ENCODE measurements at regions of chr19 and their contacts with region 1.

Region 1: GRCh38 chr19:12333162-12334159 is at the start of gene ZNF563:
- DNase-seq: peak; percentile 99
- ATAC-seq: peak; percentile 93
- H3K4me3 Mint-ChIP-seq: peak within 1 kb of the TSS; percentile 78
- H3K27ac Mint-ChIP-seq: peak within 1 kb of the TSS; percentile 98
- H3K4me1 Mint-ChIP-seq: peaks cover 32% of the 10 kb centered on the region
- H3K27me3 Mint-ChIP-seq: no peaks in the 10 kb centered on the region
- total RNA-seq, gene ZNF563: 6.6 to 6.7 TPM

Region 2: DNA sequence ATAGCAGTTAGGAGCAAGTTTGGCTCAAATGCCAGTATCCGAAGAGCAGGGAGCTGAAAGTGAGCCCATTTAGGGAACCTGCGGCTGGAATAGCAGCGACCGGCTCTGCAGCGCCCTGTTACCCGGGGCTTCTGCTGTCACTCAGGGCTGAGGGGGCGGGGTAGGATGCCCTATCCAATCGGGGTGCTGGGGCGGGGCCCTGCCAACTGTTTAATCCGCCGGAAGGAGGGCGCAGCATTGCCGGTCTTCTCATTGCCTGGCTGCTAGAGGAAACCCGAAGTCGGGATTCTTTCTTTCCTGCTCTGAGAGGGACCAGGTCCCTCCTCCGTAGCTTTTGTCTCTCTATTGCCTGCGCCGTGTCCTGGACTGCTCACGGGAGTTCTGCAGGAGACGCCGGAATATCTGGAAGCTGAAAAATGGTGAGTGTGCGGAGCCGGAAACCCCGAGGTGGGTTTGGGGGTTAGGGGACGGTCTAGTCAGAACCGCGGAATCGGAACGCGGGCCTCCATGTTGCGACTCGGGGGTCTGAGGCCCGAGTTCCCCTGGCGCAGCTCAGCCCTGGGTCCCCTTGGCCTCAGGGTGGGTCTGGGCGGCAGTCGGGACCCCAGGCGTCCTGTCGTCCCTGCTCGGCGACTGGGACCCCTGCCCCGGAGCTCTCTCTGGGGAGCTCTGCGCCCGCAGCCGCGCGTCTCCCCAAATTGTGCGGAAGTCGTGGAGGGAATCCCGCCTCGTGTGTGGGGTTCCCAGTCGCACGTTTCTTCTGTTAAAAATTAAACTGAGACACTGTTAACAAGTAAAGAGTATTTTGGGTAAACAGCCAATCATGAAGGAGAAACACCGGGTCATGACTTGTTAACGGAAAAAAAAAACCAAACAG is 345.8 kb before region 1 on chr19:
- CTCF ChIA-PET with region 1: no interaction called
- POLR2A ChIA-PET with region 1: no interaction called
- intact Hi-C with region 1: loop called in 1 of 2 experiments (anchors 1 kb)
- DNase-seq: peak; percentile 98
- ATAC-seq: peak; percentile 98
- H3K4me3 Mint-ChIP-seq: peak overlapping the region; percentile 86
- H3K27ac Mint-ChIP-seq: peak overlapping the region; percentile 92
- H3K4me1 Mint-ChIP-seq: peaks cover 18% of the 10 kb centered on the region
- H3K27me3 Mint-ChIP-seq: no peaks in the 10 kb centered on the region

Region 3: GRCh38 chr19:12194827-12195731 is 138.4 kb before region 1 on chr19:
- CTCF ChIA-PET with region 1: no interaction called
- POLR2A ChIA-PET with region 1: no interaction called
- intact Hi-C with region 1: loop called (anchors 5 kb)
- DNase-seq: peak; percentile 91
- ATAC-seq: peak; percentile 94
- H3K4me3 Mint-ChIP-seq: peak overlapping the region; percentile 78
- H3K27ac Mint-ChIP-seq: peak overlapping the region; percentile 86
- H3K4me1 Mint-ChIP-seq: peaks cover 33% of the 10 kb centered on the region
- H3K27me3 Mint-ChIP-seq: peaks cover 5% of the 10 kb centered on the region

Region 4: GRCh38 chr19:12365236-12366162 is 32.0 kb after region 1 on chr19 and contains the start of gene ZNF442:
- CTCF ChIA-PET with region 1: interaction called, 4 read pairs
- POLR2A ChIA-PET with region 1: interaction called, 5 read pairs
- intact Hi-C with region 1: loop called (anchors 1 to 5 kb)
- DNase-seq: peak; percentile 93
- ATAC-seq: peak; percentile 99
- H3K4me3 Mint-ChIP-seq: peak within 1 kb of the TSS; percentile 93
- H3K27ac Mint-ChIP-seq: peak within 1 kb of the TSS; percentile 79
- H3K4me1 Mint-ChIP-seq: peaks cover 18% of the 10 kb centered on the region
- H3K27me3 Mint-ChIP-seq: no peaks in the 10 kb centered on the region
- total RNA-seq, gene ZNF442: 1.1 to 1.7 TPM

Region 5: DNA sequence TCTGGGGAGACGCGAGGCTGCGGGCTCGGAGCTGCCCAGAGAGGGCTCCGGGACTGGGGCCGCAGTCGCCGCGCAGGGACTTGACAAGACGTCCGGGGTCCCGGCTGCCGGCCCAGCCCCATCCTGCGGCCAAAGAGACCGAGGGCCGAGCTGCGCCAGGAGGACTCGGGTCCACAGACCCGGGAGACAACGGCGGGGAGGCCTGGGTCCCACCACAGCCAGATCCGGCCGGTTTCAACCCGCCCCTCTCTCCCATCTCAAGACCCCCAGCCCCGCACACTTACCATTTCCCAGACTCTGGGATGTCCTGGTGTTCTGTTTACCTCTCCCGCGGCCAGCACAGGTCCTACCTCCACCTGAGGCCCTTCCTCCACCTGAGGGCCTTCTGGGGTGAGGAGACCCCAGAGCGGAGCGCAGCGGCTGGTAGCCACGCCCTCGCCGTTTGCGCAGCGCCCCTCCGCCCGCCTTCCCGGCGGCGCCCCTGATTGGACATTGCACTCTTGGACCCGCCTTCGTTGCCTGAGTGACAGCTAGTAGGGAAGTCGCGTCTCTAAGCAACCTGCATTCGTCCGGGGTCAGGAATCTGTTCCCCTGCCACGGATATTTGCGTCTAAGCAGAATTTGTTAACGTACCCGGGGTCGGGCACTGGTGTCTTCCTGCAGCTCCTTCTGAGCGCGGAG is 151.1 kb after region 1 on chr19 and contains the start of gene ZNF709:
- CTCF ChIA-PET with region 1: no interaction called
- POLR2A ChIA-PET with region 1: no interaction called
- intact Hi-C with region 1: loop called in 1 of 2 experiments (anchors 1 kb)
- DNase-seq: peak; percentile 92
- ATAC-seq: peak; percentile 98
- H3K4me3 Mint-ChIP-seq: peak within 1 kb of the TSS; percentile 87
- H3K27ac Mint-ChIP-seq: peak within 1 kb of the TSS; percentile 58
- H3K4me1 Mint-ChIP-seq: peaks cover 27% of the 10 kb centered on the region
- H3K27me3 Mint-ChIP-seq: no peaks in the 10 kb centered on the region
- total RNA-seq, gene ZNF709: 1.7 to 2.1 TPM

Measured in activated CD4-positive, alpha-beta T cell treated with anti-CD3 and anti-CD28 coated beads for 36 hours (primary cell).